GM12878 (cell line): ENCODE measurements at regions of chr7 and their contacts with region 1.

Region 1: GRCh38 chr7:129122751-129123509 is 21.6 kb upstream of the TSPAN33 start:
- DNase-seq: peak; percentile 95
- ATAC-seq: peak; percentile 91
- H3K4me3 ChIP-seq: peak overlapping the region; percentile 43
- H3K27ac ChIP-seq: peak overlapping the region; percentile 96
- H3K4me1 ChIP-seq: peaks cover 36% of the 10 kb centered on the region
- H3K27me3 ChIP-seq: no peaks in the 10 kb centered on the region
- CTCF ChIP-seq: no peak
- EP300 ChIP-seq: peak; percentile 98
- POLR2A ChIP-seq: no peak
- RAD21 ChIP-seq: no peak

Region 2: DNA sequence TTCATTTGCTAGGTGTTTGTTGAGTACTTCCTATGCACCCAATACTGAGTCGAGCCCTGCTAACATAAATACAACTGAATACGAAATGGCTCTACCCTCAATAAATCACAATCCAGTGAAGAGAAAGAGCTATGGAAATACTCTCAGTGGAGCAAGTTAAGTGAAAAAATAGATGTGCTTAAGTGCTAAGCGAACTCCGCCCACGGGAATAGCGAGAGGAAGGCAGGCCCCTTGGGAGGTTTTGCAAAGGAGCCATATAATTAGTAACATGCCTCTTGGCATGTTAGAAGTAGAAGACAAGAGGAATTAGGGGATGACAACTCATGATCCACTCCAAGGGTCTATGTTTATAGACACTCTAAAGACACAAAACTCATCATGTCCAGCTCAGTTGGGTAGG is 21.2 kb before region 1 on chr7:
- CTCF ChIA-PET with region 1: interaction called, 5 read pairs
- POLR2A ChIA-PET with region 1: interaction called, 12 read pairs
- RAD21 ChIA-PET with region 1: interaction called, 14 read pairs
- SMC1A ChIA-PET with region 1: interaction called, 28 read pairs
- in situ Hi-C with region 1: no loop called
- intact Hi-C with region 1: no loop called
- DNase-seq: no peak
- ATAC-seq: no peak; the same call in 2 of the 3 replicates
- H3K4me3 ChIP-seq: no peak overlapping the region
- H3K27ac ChIP-seq: no peak overlapping the region
- H3K4me1 ChIP-seq: peaks cover 21% of the 10 kb centered on the region
- H3K27me3 ChIP-seq: no peaks in the 10 kb centered on the region
- CTCF ChIP-seq: no peak
- EP300 ChIP-seq: no peak
- POLR2A ChIP-seq: no peak
- RAD21 ChIP-seq: no peak

Region 3: DNA sequence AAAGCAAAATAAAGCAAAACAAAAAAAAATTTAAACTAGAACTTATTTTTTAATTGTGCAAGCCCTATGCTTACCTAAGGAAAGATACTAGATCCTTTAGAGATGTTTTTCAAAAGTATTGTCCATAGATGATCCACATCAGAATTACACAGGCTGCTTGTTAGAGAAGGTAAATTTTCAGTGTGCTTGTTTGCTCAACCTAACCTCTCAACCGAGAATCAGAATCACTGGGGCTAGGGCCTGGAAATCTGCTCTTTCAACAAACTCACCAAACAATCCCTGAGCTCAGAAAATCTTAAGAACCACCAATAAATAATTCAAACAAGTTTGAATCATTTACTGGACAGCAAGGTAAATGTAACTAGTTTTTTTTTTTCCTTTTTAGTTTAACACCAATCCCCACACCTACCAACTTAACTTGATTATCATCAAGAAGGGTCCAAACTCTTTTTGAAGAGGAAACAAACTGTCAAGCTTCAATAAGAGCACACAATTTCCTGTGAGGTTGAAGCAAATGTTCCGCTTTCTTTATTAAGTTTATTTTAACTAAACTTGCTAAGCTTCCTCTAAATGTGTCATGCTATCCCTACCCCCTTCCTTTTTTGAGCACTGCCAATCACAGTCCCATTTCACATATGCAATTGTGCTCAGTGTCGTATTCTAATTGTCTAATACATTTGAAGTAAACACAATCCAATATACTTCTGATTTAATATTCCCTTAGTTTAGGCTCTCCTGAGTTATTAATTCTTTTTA is 14.1 kb after region 1 on chr7:
- CTCF ChIA-PET with region 1: interaction called, 5 read pairs
- POLR2A ChIA-PET with region 1: interaction called, 10 read pairs
- RAD21 ChIA-PET with region 1: interaction called, 15 read pairs
- SMC1A ChIA-PET with region 1: interaction called, 20 read pairs
- in situ Hi-C with region 1: no loop called
- intact Hi-C with region 1: no loop called
- DNase-seq: no peak
- ATAC-seq: peak; percentile 83
- H3K4me3 ChIP-seq: no peak overlapping the region
- H3K27ac ChIP-seq: peak overlapping the region; percentile 47
- H3K4me1 ChIP-seq: peaks cover 19% of the 10 kb centered on the region
- H3K27me3 ChIP-seq: no peaks in the 10 kb centered on the region
- CTCF ChIP-seq: no peak
- EP300 ChIP-seq: 0 out of 4 replicates have a peak, but pooled peaks of 1 of the 2 experiments have one; percentile 12
- POLR2A ChIP-seq: no peak
- RAD21 ChIP-seq: no peak

Region 4: GRCh38 chr7:129144095-129144833 is 21.3 kb after region 1 on chr7 and contains the start of gene TSPAN33:
- CTCF ChIA-PET with region 1: interaction called, 12 read pairs
- POLR2A ChIA-PET with region 1: interaction called, 10 read pairs
- RAD21 ChIA-PET with region 1: interaction called, 23 read pairs
- SMC1A ChIA-PET with region 1: interaction called, 19 read pairs
- in situ Hi-C with region 1: no loop called
- intact Hi-C with region 1: loop called (anchors 1 kb)
- DNase-seq: no peak
- ATAC-seq: peak; percentile 76
- H3K4me3 ChIP-seq: peak within 1 kb of the TSS; percentile 97
- H3K27ac ChIP-seq: peak within 1 kb of the TSS; percentile 92
- H3K4me1 ChIP-seq: peaks cover 28% of the 10 kb centered on the region
- H3K27me3 ChIP-seq: no peaks in the 10 kb centered on the region
- CTCF ChIP-seq: no peak
- EP300 ChIP-seq: no peak
- POLR2A ChIP-seq: peak; percentile 73
- RAD21 ChIP-seq: no peak
- polyA plus RNA-seq, gene TSPAN33: 17.8 to 30.0 TPM

Region 5: DNA sequence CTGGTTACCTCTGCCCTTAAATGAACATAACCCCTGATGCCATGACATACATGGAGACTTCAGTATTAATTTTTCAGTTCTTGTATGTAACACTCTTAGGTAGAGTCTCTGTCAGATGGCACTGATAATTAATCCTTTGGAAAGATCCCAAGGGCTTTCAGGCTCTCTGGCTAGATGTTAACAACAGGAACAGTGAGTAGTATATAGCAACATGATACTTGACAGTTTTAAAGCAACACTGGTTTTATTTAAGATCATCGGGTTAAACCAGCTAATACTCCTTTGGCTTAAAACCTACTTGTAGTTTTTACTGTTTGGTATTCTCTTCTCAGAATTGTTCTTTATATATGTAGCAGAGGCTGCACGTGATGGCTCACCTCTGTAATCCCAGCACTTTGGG is 129.2 kb after region 1 on chr7:
- CTCF ChIA-PET with region 1: no interaction called
- POLR2A ChIA-PET with region 1: no interaction called
- RAD21 ChIA-PET with region 1: no interaction called
- SMC1A ChIA-PET with region 1: no interaction called
- in situ Hi-C with region 1: no loop called
- intact Hi-C with region 1: no loop called
- DNase-seq: no peak
- ATAC-seq: no peak
- H3K4me3 ChIP-seq: no peak overlapping the region
- H3K27ac ChIP-seq: no peak overlapping the region
- H3K4me1 ChIP-seq: no peaks in the 10 kb centered on the region
- H3K27me3 ChIP-seq: no peaks in the 10 kb centered on the region
- CTCF ChIP-seq: no peak
- EP300 ChIP-seq: no peak
- POLR2A ChIP-seq: no peak
- RAD21 ChIP-seq: no peak